HCT116 (cell line): ENCODE measurements at regions of chr4 and their contacts with region 1.

Region 1: GRCh38 chr4:144115519-144115918 is 25.0 kb downstream of the GYPA start:
- DNase-seq: no peak
- ATAC-seq: no peak
- H3K4me3 ChIP-seq: no peak overlapping the region
- H3K27ac ChIP-seq: no peak overlapping the region
- H3K4me1 ChIP-seq: no peaks in the 10 kb centered on the region
- H3K27me3 ChIP-seq: peaks cover 4% of the 10 kb centered on the region; the same call in 1 of the 2 replicates
- CTCF ChIP-seq: no peak
- POLR2A ChIP-seq: no peak
- RAD21 ChIP-seq: no peak

Region 2: GRCh38 chr4:143882892-143883291 is 232.6 kb before region 1 on chr4:
- CTCF ChIA-PET with region 1: no interaction called
- POLR2A ChIA-PET with region 1: no interaction called
- RAD21 ChIA-PET with region 1: no interaction called
- intact Hi-C with region 1: loop called (anchors 5 kb)
- DNase-seq: no peak
- ATAC-seq: no peak
- H3K4me3 ChIP-seq: no peak overlapping the region
- H3K27ac ChIP-seq: no peak overlapping the region
- H3K4me1 ChIP-seq: no peaks in the 10 kb centered on the region
- H3K27me3 ChIP-seq: no peaks in the 10 kb centered on the region
- CTCF ChIP-seq: no peak
- POLR2A ChIP-seq: no peak
- RAD21 ChIP-seq: no peak

Region 3: GRCh38 chr4:145251391-145251790 is 1135.9 kb after region 1 on chr4:
- CTCF ChIA-PET with region 1: no interaction called
- POLR2A ChIA-PET with region 1: no interaction called
- RAD21 ChIA-PET with region 1: no interaction called
- intact Hi-C with region 1: no loop called
- DNase-seq: no peak
- ATAC-seq: no peak
- H3K4me3 ChIP-seq: no peak overlapping the region
- H3K27ac ChIP-seq: no peak overlapping the region
- H3K4me1 ChIP-seq: no peaks in the 10 kb centered on the region
- H3K27me3 ChIP-seq: no peaks in the 10 kb centered on the region
- CTCF ChIP-seq: no peak
- POLR2A ChIP-seq: no peak
- RAD21 ChIP-seq: no peak